Upper lobe of right lung (tissue), 1 donor: ENCODE measurements at regions of chr15 and their contacts with region 1.

Region 1: DNA sequence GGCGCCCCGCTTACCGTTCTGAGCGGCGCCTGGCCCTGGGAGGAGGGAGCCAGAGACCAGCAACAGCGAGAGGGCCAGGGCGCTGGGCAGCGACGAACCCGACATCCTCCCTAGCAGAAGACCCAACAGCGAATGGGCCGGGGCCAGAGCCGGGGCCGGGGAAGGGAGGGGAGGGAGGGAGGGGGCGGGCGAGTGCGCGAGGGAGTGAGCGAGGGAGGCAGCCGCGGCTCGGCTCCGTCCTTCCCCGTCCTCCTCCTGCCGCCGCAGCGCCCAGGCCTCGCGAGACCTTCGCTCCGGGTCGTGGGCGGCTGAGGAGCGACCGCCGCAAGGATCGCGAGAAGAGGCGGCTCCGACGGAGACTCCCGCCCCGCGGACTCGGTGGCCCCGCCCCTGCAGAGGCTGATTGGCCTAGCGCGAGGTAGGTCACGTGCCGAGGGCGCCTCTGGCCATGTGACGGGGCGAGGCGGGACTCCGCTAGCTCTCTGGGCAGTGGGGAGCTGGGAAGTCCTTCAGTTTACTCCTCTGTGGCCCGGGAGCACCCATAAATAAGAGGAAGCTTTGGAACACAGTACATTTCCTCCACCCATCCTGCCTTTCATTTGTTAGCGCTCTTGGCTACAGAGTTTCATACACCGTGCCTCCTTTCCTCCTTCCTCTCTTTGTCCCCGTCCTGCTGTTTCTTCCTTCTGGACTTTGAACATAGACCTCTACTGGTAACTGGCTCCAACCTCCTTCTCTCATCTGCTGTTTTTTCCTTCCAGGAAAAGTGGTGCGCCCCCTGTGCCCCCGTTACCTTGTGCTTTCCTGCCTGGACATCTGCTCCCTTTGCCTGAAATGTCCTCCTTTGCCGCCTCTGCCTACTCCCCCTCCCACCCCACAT is at the start of gene NPTN:
- DNase-seq: peak; percentile 100
- ATAC-seq: peak; percentile 96
- H3K4me3 ChIP-seq: peak within 1 kb of the TSS; percentile 84
- H3K27ac ChIP-seq: peak within 1 kb of the TSS; percentile 95
- H3K4me1 ChIP-seq: peaks cover 33% of the 10 kb centered on the region
- H3K27me3 ChIP-seq: no peaks in the 10 kb centered on the region
- CTCF ChIP-seq: no peak
- total RNA-seq, gene NPTN: 131 TPM

Region 2: GRCh38 chr15:73560501-73561117 is 72.7 kb before region 1 on chr15:
- intact Hi-C with region 1: loop called (anchors 10 kb)
- DNase-seq: no peak
- ATAC-seq: peak; percentile 62
- H3K4me3 ChIP-seq: no peak overlapping the region
- H3K27ac ChIP-seq: no peak overlapping the region
- H3K4me1 ChIP-seq: peaks cover 7% of the 10 kb centered on the region
- H3K27me3 ChIP-seq: no peaks in the 10 kb centered on the region
- CTCF ChIP-seq: peak; percentile 61

Region 3: GRCh38 chr15:73697033-73697467 is 63.7 kb after region 1 on chr15:
- intact Hi-C with region 1: loop called (anchors 10 kb)
- DNase-seq: peak; percentile 85
- ATAC-seq: peak; percentile 91
- H3K4me3 ChIP-seq: no peak overlapping the region
- H3K27ac ChIP-seq: no peak overlapping the region
- H3K4me1 ChIP-seq: peaks cover 37% of the 10 kb centered on the region
- H3K27me3 ChIP-seq: no peaks in the 10 kb centered on the region
- CTCF ChIP-seq: no peak

Region 4: GRCh38 chr15:73717802-73718201 is 84.5 kb after region 1 on chr15:
- intact Hi-C with region 1: no loop called
- DNase-seq: no peak
- ATAC-seq: no peak
- H3K4me3 ChIP-seq: no peak overlapping the region
- H3K27ac ChIP-seq: no peak overlapping the region
- H3K4me1 ChIP-seq: peaks cover 7% of the 10 kb centered on the region
- H3K27me3 ChIP-seq: no peaks in the 10 kb centered on the region
- CTCF ChIP-seq: no peak